HepG2 (cell line): ENCODE measurements at regions of chrX and their contacts with region 1.

Region 1: DNA sequence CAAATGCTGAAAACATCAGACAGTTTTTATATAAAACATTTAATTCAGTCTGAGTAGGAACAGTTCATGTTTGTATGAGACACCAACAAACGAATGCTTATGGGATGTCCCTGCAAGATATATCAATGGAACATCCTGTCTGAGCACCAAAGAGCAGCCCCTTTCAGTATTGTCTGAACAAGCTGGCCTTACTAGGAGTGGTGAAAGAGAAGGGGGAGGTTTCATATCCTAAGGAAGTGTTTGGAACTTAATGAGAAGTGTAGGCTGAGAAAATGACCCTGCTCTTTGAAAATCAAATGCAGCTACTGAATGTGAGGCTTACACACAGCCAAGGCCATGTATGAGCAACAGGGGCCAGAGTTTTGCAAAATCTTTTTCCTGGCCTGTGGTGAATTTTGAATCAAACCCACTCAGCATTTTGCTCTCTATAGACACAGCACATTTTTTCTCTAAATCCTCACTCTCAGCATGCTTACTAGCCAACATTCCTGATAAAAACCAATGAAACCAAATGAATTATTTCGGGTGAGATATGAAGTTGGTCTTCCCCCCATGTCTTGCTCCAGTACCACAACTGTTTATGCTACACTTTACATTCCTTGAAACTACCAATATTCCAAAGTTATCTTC is 119.4 kb downstream of the LUZP4 start:
- DNase-seq: no peak
- ATAC-seq: no peak
- H3K4me3 ChIP-seq: no peak overlapping the region
- H3K27ac ChIP-seq: no peak overlapping the region
- H3K4me1 ChIP-seq: no peaks in the 10 kb centered on the region
- H3K27me3 ChIP-seq: no peaks in the 10 kb centered on the region
- CTCF ChIP-seq: no peak
- EP300 ChIP-seq: no peak
- POLR2A ChIP-seq: no peak
- RAD21 ChIP-seq: no peak

Region 2: DNA sequence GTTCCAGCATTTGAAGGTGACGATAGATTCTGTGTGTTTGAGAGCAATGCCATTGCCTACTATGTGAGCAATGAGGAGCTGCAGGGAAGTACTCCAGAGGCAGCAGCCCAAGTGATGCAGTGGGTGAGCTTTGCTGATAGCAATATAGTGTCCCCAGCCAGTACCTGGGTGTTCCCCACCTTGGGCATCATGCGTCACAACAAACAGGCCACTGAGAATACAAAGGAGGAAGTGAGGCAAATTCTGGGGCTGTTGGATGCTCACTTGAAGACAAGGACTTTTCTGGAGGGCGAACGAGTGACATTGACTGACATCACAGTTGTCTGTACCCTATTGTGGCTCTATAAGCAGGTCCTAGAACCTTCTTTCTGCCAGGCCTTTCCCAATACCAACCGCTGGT is 294.1 kb after region 1 on chrX:
- CTCF ChIA-PET with region 1: no interaction called
- POLR2A ChIA-PET with region 1: no interaction called
- in situ Hi-C with region 1: no loop called
- intact Hi-C with region 1: loop called (anchors 5 kb)
- DNase-seq: no peak
- ATAC-seq: no peak
- H3K4me3 ChIP-seq: no peak overlapping the region
- H3K27ac ChIP-seq: no peak overlapping the region
- H3K4me1 ChIP-seq: no peaks in the 10 kb centered on the region
- H3K27me3 ChIP-seq: no peaks in the 10 kb centered on the region
- CTCF ChIP-seq: no peak
- EP300 ChIP-seq: no peak
- POLR2A ChIP-seq: no peak
- RAD21 ChIP-seq: no peak